K562 (cell line): ENCODE measurements at regions of chr3 and their contacts with region 1.

Region 1: GRCh38 chr3:113912552-113913236 is 35.1 kb upstream of the ZDHHC23 start:
- DNase-seq: peak; percentile 14 to 55 (median 20)
- ATAC-seq: peak; percentile 84
- H3K4me3 ChIP-seq: no peak overlapping the region
- H3K27ac ChIP-seq: no peak overlapping the region
- H3K4me1 ChIP-seq: no peaks in the 10 kb centered on the region
- H3K27me3 ChIP-seq: no peaks in the 10 kb centered on the region
- CTCF ChIP-seq: peak; percentile 51 to 71 (median 58)
- EP300 ChIP-seq: no peak
- POLR2A ChIP-seq: no peak
- RAD21 ChIP-seq: peak; percentile 32 to 73; a peak in 3 of 4 replicates

Region 2: GRCh38 chr3:113736548-113737089 is 176.1 kb before region 1 on chr3:
- CTCF ChIA-PET with region 1: interaction called, 9 read pairs
- POLR2A ChIA-PET with region 1: no interaction called
- in situ Hi-C with region 1: loop called (anchors 5 kb)
- intact Hi-C with region 1: loop called (anchors 1 kb)
- DNase-seq: peak in 2 of 4 experiments; percentile 27 to 54
- ATAC-seq: peak; percentile 73
- H3K4me3 ChIP-seq: no peak overlapping the region
- H3K27ac ChIP-seq: peak overlapping the region; percentile 19; the same call in 1 of the 3 replicates
- H3K4me1 ChIP-seq: peaks cover 0 to 10% of the 10 kb centered on the region in 2 experiments; a peak in 2 of 5 replicates
- H3K27me3 ChIP-seq: no peaks in the 10 kb centered on the region
- CTCF ChIP-seq: peak; percentile 35 to 68 (median 47); a peak in 4 of 6 replicates
- EP300 ChIP-seq: no peak
- POLR2A ChIP-seq: no peak
- RAD21 ChIP-seq: peak; percentile 58 to 62

Region 3: GRCh38 chr3:113745273-113746068 is 167.2 kb before region 1 on chr3:
- CTCF ChIA-PET with region 1: no interaction called
- POLR2A ChIA-PET with region 1: no interaction called
- in situ Hi-C with region 1: loop called (anchors 5 kb)
- intact Hi-C with region 1: no loop called
- DNase-seq: peak; percentile 47 to 85 (median 68)
- ATAC-seq: peak; percentile 78
- H3K4me3 ChIP-seq: peak overlapping the region; percentile 90
- H3K27ac ChIP-seq: peak overlapping the region; percentile 98
- H3K4me1 ChIP-seq: peaks cover 7 to 11% of the 10 kb centered on the region in 2 experiments
- H3K27me3 ChIP-seq: no peaks in the 10 kb centered on the region
- CTCF ChIP-seq: peak; percentile 60 to 77 (median 76); a peak in 5 of 6 replicates
- EP300 ChIP-seq: no peak
- POLR2A ChIP-seq: no peak
- RAD21 ChIP-seq: peak; percentile 48 to 53; a peak in 3 of 4 replicates

Region 4: GRCh38 chr3:113838631-113839209 is 74.0 kb before region 1 on chr3 and contains the start of gene GRAMD1C:
- CTCF ChIA-PET with region 1: interaction called, 4 read pairs
- POLR2A ChIA-PET with region 1: no interaction called
- in situ Hi-C with region 1: loop called (anchors 10 kb)
- intact Hi-C with region 1: loop called (anchors 1 kb)
- DNase-seq: peak; percentile 68 to 82 (median 71)
- ATAC-seq: peak; percentile 100
- H3K4me3 ChIP-seq: peak within 1 kb of the TSS; percentile 35
- H3K27ac ChIP-seq: no peak within 1 kb of the TSS
- H3K4me1 ChIP-seq: peaks cover 0 to 5% of the 10 kb centered on the region in 2 experiments; a peak in 1 of 5 replicates
- H3K27me3 ChIP-seq: peaks cover 0 to 6% of the 10 kb centered on the region in 2 experiments; a peak in 2 of 5 replicates
- CTCF ChIP-seq: peak; percentile 63 to 83 (median 75)
- EP300 ChIP-seq: no peak
- POLR2A ChIP-seq: no peak
- RAD21 ChIP-seq: peak; percentile 19 to 61; a peak in 2 of 4 replicates
- polyA plus RNA-seq, gene GRAMD1C: not detected

Region 5: DNA sequence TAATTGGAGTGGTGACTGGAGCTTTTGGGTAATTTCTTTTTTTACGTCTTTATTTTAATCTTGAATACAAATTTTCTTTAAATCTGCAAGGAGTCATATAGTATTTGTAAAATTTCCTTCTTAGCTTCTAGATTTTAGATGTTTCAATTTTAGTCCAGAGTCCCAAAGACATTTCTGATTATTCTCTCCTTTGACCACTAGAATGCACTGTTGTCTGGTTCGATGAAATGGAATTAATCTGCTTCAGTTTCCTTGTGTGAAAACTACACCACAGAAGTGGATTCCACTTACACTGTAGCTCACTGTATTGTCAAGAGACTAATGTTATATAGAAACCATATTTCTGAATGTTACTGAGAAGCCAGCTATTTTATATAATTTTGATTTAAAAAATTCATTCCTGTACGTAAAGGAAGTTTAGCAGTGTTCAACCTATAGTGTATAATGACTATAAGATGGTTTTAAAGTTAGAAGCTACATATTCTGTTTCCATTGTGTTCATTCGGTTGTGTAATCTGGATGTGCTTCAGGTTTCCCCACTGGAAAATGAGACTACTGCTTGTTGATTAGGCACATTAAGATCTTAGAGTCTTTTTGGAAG is 68.0 kb before region 1 on chr3:
- CTCF ChIA-PET with region 1: interaction called, 3 read pairs
- POLR2A ChIA-PET with region 1: no interaction called
- in situ Hi-C with region 1: loop called (anchors 10 kb)
- intact Hi-C with region 1: no loop called
- DNase-seq: peak in 2 of 4 experiments; percentile 15 to 21
- ATAC-seq: peak; percentile 58; the same call in 1 of the 3 replicates
- H3K4me3 ChIP-seq: no peak overlapping the region
- H3K27ac ChIP-seq: no peak overlapping the region
- H3K4me1 ChIP-seq: no peaks in the 10 kb centered on the region
- H3K27me3 ChIP-seq: no peaks in the 10 kb centered on the region
- CTCF ChIP-seq: peak in 2 of 3 experiments; percentile 25 to 50; a peak in 3 of 6 replicates
- EP300 ChIP-seq: no peak
- POLR2A ChIP-seq: no peak
- RAD21 ChIP-seq: peak; percentile 18 to 52; a peak in 3 of 4 replicates

Region 6: DNA sequence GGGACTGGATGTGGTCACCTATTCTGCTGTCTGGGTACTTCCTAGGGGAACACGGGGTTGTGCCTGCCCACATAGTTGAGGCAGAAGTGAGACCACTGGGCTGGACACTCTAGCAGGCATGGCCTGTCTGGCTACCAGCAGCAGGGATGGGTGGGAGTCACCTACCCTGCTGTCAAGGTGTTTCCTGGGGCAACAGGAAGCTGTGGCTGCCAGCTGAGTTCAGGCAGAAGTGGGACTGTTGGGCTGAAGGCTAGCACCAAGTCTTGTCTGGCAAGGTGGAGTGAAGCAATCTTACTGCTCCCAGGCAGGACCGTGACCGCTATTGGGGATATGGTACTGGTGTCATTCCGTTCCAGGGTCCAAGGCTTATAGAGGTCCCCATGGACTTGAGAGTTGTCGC is 14.9 kb after region 1 on chr3:
- CTCF ChIA-PET with region 1: no interaction called
- POLR2A ChIA-PET with region 1: no interaction called
- in situ Hi-C with region 1: no loop called
- intact Hi-C with region 1: no loop called
- DNase-seq: no peak
- ATAC-seq: no peak
- H3K4me3 ChIP-seq: no peak overlapping the region
- H3K27ac ChIP-seq: no peak overlapping the region
- H3K4me1 ChIP-seq: no peaks in the 10 kb centered on the region
- H3K27me3 ChIP-seq: no peaks in the 10 kb centered on the region; a peak in 1 of 5 replicates
- CTCF ChIP-seq: no peak
- EP300 ChIP-seq: no peak
- POLR2A ChIP-seq: no peak
- RAD21 ChIP-seq: no peak